ENCODE measurements at regions of chr16 and their contacts with region 1.

Region 1: DNA sequence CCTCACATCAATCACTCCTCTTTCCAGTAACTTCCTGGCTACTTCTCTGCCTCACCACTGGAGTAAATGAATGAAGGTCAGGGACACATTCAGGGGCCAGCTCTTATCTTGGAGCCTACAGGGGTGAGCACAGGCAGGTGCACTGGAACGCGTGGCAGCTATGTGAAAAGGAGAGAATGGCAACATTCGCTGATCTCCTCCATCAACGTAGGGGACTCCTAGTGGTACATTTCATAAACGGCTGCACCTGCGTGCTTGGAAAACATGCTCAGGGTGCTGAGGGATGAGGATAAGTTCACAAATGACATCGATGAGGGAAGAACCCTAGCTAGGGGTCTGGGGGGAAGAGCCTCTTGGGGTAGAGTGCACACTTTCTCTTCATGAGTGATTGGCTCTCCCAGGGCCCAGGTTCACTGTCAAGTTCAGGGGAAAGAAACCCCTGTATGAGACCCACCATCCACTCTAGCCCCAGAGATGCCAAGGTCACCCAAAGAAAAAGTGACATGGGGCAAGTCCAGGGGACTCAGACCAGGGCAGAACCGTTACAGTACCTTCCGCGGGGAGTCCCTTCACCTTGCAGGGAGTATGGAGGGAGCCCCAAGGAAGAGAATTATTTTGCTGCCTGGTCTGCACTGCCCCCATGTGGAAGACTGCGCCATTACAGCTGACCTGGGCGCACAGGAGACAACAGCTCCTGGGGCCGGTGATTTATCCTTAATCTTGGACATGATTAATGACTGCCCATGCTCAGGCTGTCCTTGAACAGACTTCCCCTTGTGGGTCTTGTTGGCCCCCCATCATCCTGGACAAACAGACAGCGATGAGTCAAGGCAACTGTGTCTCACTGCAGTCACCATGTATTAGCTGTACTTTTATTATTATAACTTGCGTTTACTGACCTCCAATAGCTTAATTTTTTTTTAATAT is 30.1 kb downstream of the VAC14 start:
- DNase-seq: peak; percentile 64 to 70
- ATAC-seq: peak; percentile 79 to 93
- H3K4me3 ChIP-seq: no peak overlapping the region
- H3K27ac ChIP-seq: peak overlapping the region; percentile 47 to 68
- H3K4me1 ChIP-seq: peaks cover 27% of the 10 kb centered on the region
- CTCF ChIP-seq: peak; percentile 95
- EP300 ChIP-seq: no peak
- POLR2A ChIP-seq: no peak
- RAD21 ChIP-seq: peak; percentile 96 to 98

Region 2: DNA sequence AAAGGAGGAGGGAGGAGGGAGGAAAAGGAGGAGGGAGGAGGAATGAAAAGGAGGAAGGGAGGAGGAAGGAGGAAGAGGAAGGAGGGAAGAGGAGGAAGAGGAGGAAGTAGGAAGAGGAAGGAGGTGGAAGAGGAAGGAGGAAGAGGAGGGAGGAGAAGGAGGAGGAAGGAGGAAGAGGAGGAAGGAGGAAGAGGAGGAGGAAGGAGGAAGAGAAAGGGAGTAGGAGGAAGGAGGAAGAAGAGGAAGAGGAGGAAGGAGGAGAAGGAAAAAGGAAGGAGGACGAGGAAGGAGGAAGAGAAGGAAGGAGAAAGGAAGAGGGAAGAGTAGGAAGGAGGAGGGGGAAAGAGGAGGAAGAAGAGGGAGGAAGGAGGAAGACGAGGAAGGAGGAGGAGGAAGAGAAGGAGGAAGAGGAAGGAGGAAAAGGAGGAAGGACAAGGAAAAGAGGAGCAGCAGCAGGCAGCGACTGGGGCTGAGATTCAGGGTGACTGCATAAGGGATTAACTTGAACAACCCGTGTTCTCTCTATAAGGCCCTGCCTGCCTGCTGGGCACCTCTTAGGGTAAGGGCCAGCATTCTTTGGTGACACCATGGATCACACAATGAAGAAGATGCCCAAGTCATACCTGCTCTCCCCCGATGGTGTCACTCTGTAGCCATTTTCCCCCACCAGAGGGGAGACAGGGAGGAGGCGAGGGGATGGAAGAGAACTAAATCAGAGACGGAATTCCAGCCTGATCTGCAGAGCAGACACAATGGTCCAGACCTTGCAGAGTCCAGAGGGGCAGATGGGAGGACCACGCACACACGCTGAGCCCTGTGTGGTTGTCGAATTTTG is 125.9 kb before region 1 on chr16:
- CTCF ChIA-PET with region 1: no interaction called
- POLR2A ChIA-PET with region 1: no interaction called
- DNase-seq: no peak
- ATAC-seq: peak; percentile 51 to 52; a peak in 4 of 6 replicates
- H3K4me3 ChIP-seq: no peak overlapping the region
- H3K27ac ChIP-seq: no peak overlapping the region
- H3K4me1 ChIP-seq: no peaks in the 10 kb centered on the region
- CTCF ChIP-seq: no peak
- EP300 ChIP-seq: no peak
- POLR2A ChIP-seq: no peak
- RAD21 ChIP-seq: peak in 1 of 2 experiments; percentile 27; a peak in 2 of 5 replicates

Region 3: GRCh38 chr16:70661918-70662641 is 108.8 kb before region 1 on chr16:
- CTCF ChIA-PET with region 1: interaction called, 29 read pairs
- POLR2A ChIA-PET with region 1: no interaction called
- DNase-seq: no peak
- ATAC-seq: peak; percentile 11 to 25; a peak in 2 of 6 replicates
- H3K4me3 ChIP-seq: no peak overlapping the region
- H3K27ac ChIP-seq: no peak overlapping the region
- H3K4me1 ChIP-seq: no peaks in the 10 kb centered on the region
- CTCF ChIP-seq: no peak
- EP300 ChIP-seq: no peak
- POLR2A ChIP-seq: no peak
- RAD21 ChIP-seq: no peak

Region 4: GRCh38 chr16:70691223-70692129 is 79.4 kb before region 1 on chr16:
- CTCF ChIA-PET with region 1: interaction called, 463 read pairs
- POLR2A ChIA-PET with region 1: interaction called, 4 read pairs
- DNase-seq: peak in 1 of 2 experiments; percentile 67
- ATAC-seq: no peak; a peak in 1 of 6 replicates
- H3K4me3 ChIP-seq: no peak overlapping the region
- H3K27ac ChIP-seq: peak overlapping the region; percentile 97 to 100
- H3K4me1 ChIP-seq: peaks cover 97% of the 10 kb centered on the region
- CTCF ChIP-seq: no peak
- EP300 ChIP-seq: no peak
- POLR2A ChIP-seq: no peak
- RAD21 ChIP-seq: no peak

Region 5: DNA sequence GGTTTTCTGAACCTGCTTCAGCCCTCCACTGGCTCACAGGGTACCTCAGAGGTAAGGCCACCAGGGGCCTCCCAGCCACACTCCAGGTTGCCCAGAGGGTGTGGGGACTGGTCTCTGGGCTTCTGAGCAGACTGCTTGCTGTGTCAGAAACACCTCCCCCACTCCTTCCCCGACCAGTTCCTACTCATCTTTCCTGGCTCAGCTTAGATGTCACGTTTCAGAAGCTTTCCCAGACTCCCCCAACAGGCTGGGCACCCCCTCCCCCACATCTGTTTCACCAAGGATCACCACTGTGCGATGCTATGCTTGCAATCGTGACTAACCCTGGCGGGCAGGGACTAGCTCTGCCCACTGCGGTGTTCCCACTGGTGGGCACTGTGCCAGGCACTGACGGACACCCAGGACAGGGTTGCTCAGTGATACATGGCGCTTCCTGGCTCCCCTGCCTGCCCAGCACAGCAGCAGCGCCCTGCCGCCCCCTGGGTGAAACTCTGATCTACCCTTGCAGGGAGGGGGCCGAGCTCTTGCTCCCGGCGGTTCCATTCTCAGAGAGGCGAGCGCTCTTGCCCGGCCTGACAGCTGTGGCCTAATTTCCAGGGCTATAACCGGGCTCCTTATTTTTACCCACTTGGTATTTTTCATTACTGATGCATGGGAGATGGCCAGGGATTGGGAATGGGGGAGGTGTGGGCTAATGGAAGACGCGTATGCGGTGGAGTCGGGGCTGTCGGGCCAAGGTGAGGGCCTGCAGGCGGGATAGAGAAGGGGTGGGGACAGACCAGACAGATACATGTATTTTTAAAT is 55.6 kb before region 1 on chr16:
- CTCF ChIA-PET with region 1: interaction called, 38 read pairs
- POLR2A ChIA-PET with region 1: interaction called, 3 read pairs
- DNase-seq: peak; percentile 87 to 93
- ATAC-seq: peak; percentile 85 to 93
- H3K4me3 ChIP-seq: no peak overlapping the region
- H3K27ac ChIP-seq: peak overlapping the region; percentile 83 to 92
- H3K4me1 ChIP-seq: peaks cover 49% of the 10 kb centered on the region
- CTCF ChIP-seq: no peak
- EP300 ChIP-seq: peak in 1 of 2 experiments; percentile 40; a peak in 1 of 5 replicates
- POLR2A ChIP-seq: no peak
- RAD21 ChIP-seq: peak; percentile 38 to 49; a peak in 3 of 5 replicates

Region 6: GRCh38 chr16:70730031-70730430 is 40.9 kb before region 1 on chr16:
- CTCF ChIA-PET with region 1: interaction called, 23 read pairs
- POLR2A ChIA-PET with region 1: no interaction called
- DNase-seq: no peak
- ATAC-seq: no peak
- H3K4me3 ChIP-seq: no peak overlapping the region
- H3K27ac ChIP-seq: no peak overlapping the region
- H3K4me1 ChIP-seq: no peaks in the 10 kb centered on the region
- CTCF ChIP-seq: no peak
- EP300 ChIP-seq: no peak
- POLR2A ChIP-seq: no peak
- RAD21 ChIP-seq: no peak

Region 7: GRCh38 chr16:70746708-70747424 is 24.0 kb before region 1 on chr16:
- CTCF ChIA-PET with region 1: interaction called, 64 read pairs
- POLR2A ChIA-PET with region 1: no interaction called
- DNase-seq: peak; percentile 91 to 95
- ATAC-seq: peak; percentile 83 to 88
- H3K4me3 ChIP-seq: no peak overlapping the region
- H3K27ac ChIP-seq: peak overlapping the region; percentile 94 to 97
- H3K4me1 ChIP-seq: peaks cover 71% of the 10 kb centered on the region
- CTCF ChIP-seq: no peak
- EP300 ChIP-seq: peak; percentile 32 to 66; a peak in 1 of 5 replicates
- POLR2A ChIP-seq: peak; percentile 11; the same call in 1 of the 2 replicates
- RAD21 ChIP-seq: peak; percentile 22 to 32; a peak in 2 of 5 replicates

Region 8: DNA sequence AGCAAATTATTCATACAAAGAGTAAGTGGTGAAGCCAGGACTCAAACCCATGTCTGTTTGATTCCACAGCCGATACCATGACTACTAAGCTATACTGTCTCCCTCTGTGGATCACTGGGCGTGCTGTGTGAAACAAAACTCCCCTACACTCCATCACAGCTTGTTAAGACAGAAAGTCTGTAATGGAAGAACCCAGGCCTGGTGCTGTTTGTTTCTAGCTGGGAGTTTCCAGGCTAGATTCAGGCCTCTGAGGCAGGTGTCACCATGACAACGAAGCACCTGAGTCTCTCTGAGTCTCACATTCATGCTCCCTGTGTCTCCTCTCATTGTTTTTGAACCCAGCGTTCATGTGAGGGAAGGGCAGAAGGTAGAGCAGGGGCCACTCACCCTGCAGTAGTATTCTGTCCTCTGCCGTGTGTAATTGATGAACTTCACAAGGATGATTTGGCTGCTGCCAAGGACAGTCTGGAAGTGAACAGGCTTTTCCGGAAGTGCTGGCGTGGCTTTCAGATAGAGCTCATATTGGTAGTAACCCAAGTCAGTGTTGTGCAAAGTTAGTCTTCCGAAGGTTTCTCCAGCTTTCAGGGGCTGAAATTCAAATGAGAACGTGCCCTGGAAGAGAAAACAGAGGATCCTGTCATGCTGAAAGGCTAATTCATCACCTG is 38.6 kb after region 1 on chr16:
- CTCF ChIA-PET with region 1: no interaction called
- POLR2A ChIA-PET with region 1: no interaction called
- DNase-seq: no peak
- ATAC-seq: no peak
- H3K4me3 ChIP-seq: no peak overlapping the region
- H3K27ac ChIP-seq: no peak overlapping the region
- H3K4me1 ChIP-seq: no peaks in the 10 kb centered on the region
- CTCF ChIP-seq: no peak
- EP300 ChIP-seq: no peak
- POLR2A ChIP-seq: no peak
- RAD21 ChIP-seq: no peak

Measured in A549 (cell line).